ENCODE measurements at regions of chr1 and their contacts with region 1.

Region 1: GRCh38 chr1:224092601-224093000 is 21.3 kb upstream of the FBXO28 start:
- DNase-seq: no peak
- H3K4me3 ChIP-seq: no peak overlapping the region
- H3K27ac ChIP-seq: no peak overlapping the region
- H3K4me1 ChIP-seq: no peaks in the 10 kb centered on the region
- H3K27me3 ChIP-seq: peaks cover 2% of the 10 kb centered on the region
- CTCF ChIP-seq: no peak

Region 2: GRCh38 chr1:223639331-223639749 is 453.3 kb before region 1 on chr1:
- CTCF ChIA-PET with region 1: no interaction called
- dilution Hi-C with region 1: no loop called
- in situ Hi-C with region 1: no loop called
- intact Hi-C with region 1: no loop called
- DNase-seq: peak; percentile 31
- H3K4me3 ChIP-seq: no peak overlapping the region
- H3K27ac ChIP-seq: no peak overlapping the region
- H3K4me1 ChIP-seq: no peaks in the 10 kb centered on the region
- H3K27me3 ChIP-seq: no peaks in the 10 kb centered on the region
- CTCF ChIP-seq: no peak

Region 3: DNA sequence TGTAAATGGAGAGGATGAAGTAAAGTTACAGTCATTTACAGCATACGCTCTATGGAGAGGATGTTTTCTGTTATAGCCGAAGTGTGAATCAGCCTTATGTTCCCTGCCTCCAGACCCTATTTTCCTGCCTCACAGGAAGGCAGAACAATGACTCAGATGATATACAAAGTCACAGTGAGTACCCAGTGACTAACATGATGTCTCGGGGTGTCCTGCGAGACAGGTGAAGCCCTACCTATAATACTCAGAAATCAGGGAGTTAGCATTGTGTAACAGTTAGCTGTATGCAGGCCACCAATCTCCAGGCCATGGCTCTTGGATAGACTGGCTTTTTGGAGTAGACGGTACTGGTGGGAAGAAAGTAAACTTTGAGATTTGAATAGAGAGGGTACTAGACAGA is 34.3 kb before region 1 on chr1:
- CTCF ChIA-PET with region 1: no interaction called
- dilution Hi-C with region 1: no loop called
- in situ Hi-C with region 1: no loop called
- intact Hi-C with region 1: no loop called
- DNase-seq: peak; percentile 92
- H3K4me3 ChIP-seq: no peak overlapping the region
- H3K27ac ChIP-seq: peak overlapping the region; percentile 37
- H3K4me1 ChIP-seq: peaks cover 20% of the 10 kb centered on the region
- H3K27me3 ChIP-seq: no peaks in the 10 kb centered on the region
- CTCF ChIP-seq: no peak

Region 4: GRCh38 chr1:224080115-224080774 is 12.4 kb before region 1 on chr1:
- CTCF ChIA-PET with region 1: no interaction called
- dilution Hi-C with region 1: no loop called
- in situ Hi-C with region 1: no loop called
- intact Hi-C with region 1: no loop called
- DNase-seq: peak; percentile 48
- H3K4me3 ChIP-seq: no peak overlapping the region
- H3K27ac ChIP-seq: no peak overlapping the region
- H3K4me1 ChIP-seq: no peaks in the 10 kb centered on the region
- H3K27me3 ChIP-seq: no peaks in the 10 kb centered on the region
- CTCF ChIP-seq: no peak

Region 5: DNA sequence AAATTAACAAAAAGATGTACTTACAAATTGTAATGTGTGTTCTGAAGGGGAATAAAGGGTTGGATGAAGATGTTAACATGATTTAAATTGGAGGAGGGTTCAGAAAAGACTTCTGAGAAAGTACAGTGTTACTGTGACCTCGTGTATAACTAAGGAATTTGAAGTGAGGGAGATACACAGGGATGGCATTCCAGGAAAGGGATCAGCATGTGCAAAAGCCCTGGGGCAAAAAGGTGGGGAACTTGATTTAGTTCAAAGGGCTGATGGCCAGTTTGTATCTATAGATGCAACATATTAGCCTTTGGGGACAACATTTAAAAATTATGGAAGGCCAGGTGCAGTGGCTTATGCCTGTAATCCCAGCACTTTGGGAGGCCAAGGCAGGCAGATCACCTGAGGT is 57.1 kb after region 1 on chr1:
- CTCF ChIA-PET with region 1: no interaction called
- dilution Hi-C with region 1: loop called (anchors 10 kb)
- in situ Hi-C with region 1: no loop called
- intact Hi-C with region 1: no loop called
- DNase-seq: no peak
- H3K4me3 ChIP-seq: no peak overlapping the region
- H3K27ac ChIP-seq: no peak overlapping the region
- H3K4me1 ChIP-seq: peaks cover 4% of the 10 kb centered on the region
- H3K27me3 ChIP-seq: no peaks in the 10 kb centered on the region
- CTCF ChIP-seq: no peak

Region 6: DNA sequence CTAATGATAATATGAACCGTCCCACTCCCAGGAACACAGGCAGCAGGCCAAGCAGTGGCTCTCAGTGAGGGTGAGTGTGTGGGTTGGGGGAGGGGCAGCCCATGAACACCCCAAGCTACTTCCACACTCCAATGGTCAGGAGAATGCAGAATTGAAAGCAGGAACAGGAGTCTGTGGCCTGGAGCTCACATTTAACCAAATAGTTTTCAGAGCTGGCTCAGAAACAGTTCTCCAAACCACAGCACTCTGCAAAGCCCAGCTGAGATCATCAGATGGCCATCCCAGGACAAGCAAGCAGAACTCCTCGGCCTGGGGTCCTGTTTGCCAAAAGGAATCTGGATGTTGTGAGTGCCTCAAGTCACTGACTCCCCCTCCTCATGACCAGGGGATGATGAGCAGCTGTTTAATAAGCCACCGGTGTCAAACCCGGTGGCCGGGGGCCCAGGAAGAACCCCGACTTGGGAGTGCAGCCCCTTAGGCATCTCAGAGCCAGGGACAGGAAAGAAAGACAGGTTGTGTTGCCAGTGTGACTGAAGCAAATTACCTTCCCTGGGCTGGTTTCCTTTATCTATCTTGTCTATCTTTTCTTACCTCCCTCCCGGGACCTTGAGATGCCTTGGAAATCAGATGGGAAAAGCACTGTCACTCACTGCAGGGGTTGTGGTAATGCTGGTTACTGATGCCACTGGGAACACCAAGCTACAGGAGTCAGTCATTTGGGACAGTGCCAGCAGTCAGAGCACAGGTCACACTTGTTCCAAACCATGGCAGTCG is 110.8 kb after region 1 on chr1:
- CTCF ChIA-PET with region 1: no interaction called
- dilution Hi-C with region 1: no loop called
- in situ Hi-C with region 1: no loop called
- intact Hi-C with region 1: no loop called
- DNase-seq: no peak
- H3K4me3 ChIP-seq: no peak overlapping the region
- H3K27ac ChIP-seq: no peak overlapping the region
- H3K4me1 ChIP-seq: peaks cover 13% of the 10 kb centered on the region
- H3K27me3 ChIP-seq: no peaks in the 10 kb centered on the region
- CTCF ChIP-seq: no peak